Activated B cell treated with CpG ODN at 0.5 μM for 24 hours (primary cell): ENCODE measurements at regions of chr20 and their contacts with region 1.

Region 1: DNA sequence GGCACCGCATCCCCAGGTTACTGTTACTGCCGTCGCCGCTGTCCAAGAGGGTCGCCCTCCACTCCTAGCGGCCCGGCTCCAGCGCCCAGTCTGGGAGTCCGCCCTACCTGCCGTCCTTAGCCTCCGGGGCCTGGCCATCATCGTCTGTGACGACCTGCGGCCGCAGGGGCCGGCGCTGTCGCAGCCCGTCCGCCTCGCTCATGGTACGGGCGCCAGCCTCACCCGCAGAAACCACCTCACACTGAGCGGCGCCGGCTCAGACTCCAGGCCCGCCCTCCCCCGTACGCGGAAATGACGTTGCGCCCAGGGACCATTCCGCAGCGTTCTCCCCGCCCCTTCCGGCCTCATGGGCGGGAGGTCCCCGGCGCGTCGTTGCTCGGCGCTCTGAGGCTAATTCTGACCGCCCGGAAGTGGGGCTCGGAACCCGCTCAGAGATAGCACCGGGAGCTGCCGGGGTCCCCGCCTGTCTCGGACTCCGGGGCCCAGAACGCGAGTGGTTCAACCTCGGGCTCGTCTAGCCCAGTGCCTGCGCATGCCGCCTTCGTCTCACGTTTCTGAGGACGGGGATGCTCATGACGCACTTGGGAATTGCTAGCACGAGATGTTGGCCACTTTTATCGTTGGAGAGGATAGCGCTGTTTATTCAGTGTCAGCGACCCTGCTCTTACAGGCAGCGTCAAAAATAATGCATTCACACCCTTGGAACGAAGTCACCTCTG is at the start of gene APMAP:
- DNase-seq: peak; percentile 97
- ATAC-seq: peak; percentile 90
- H3K4me3 Mint-ChIP-seq: peak within 1 kb of the TSS; percentile 92
- H3K27ac Mint-ChIP-seq: peak within 1 kb of the TSS; percentile 95
- H3K4me1 Mint-ChIP-seq: peaks cover 48% of the 10 kb centered on the region
- H3K27me3 Mint-ChIP-seq: no peaks in the 10 kb centered on the region
- CTCF ChIP-seq: no peak
- total RNA-seq, gene APMAP: 22.3 and 24.9 TPM in 2 replicates

Region 2: GRCh38 chr20:23357767-23358591 is 1634.7 kb before region 1 on chr20:
- CTCF ChIA-PET with region 1: no interaction called
- POLR2A ChIA-PET with region 1: no interaction called
- intact Hi-C with region 1: loop called (anchors 1 kb)
- DNase-seq: peak; percentile 100
- ATAC-seq: peak; percentile 80
- H3K4me3 Mint-ChIP-seq: peak overlapping the region; percentile 90
- H3K27ac Mint-ChIP-seq: peak overlapping the region; percentile 94
- H3K4me1 Mint-ChIP-seq: peaks cover 30% of the 10 kb centered on the region
- H3K27me3 Mint-ChIP-seq: no peaks in the 10 kb centered on the region
- CTCF ChIP-seq: no peak

Region 3: DNA sequence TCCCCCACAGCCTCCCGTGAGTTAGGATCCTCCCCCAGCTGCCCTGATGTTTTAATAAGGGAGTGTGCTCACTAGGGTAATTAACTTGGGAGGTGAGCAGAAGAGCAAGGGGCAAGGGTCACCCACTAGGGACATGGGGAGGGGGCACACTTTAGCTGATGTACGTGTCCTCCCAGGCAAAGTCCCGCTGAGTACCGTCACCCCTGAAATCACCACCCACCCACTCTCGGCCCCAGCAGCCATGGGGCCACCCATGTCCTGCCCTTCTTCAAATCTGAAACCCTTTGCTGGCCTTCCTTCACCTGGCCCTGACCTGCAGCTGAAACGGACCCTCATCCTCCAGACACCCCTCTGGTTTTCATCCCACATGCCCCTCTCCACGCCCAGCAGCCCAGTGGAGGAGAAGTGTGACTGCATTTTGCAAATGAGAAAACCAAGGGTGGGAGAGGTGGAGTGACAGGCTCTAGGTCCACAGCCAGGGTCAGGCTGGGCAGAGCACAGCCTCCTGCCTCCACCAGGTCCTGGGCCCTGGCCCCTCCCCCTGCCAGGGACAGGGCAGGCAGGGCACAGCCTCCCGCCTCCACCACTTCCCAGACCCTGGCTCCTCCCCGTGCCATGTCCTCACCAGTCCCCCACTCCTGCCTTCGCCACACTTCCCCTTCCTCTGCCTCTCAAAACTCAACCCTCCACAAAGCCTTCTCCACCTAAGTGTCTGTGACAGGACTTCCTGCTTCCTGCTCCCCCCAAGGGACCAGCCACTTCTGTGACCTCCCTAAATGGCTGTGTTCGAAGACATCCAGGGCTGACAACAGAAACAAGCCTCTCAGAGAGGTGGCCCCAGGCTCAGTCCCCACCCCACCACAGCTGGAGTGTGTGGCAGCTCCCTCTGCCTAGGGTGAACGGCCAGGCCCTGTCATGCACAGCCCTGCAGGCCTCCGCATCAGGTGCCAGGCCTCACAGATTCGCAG is 50.2 kb after region 1 on chr20:
- CTCF ChIA-PET with region 1: interaction called, 10 read pairs
- POLR2A ChIA-PET with region 1: interaction called, 7 read pairs
- intact Hi-C with region 1: loop called (anchors 1 kb)
- DNase-seq: peak; percentile 57
- ATAC-seq: peak; percentile 92
- H3K4me3 Mint-ChIP-seq: peak overlapping the region; percentile 51
- H3K27ac Mint-ChIP-seq: peak overlapping the region; percentile 90
- H3K4me1 Mint-ChIP-seq: peaks cover 70% of the 10 kb centered on the region
- H3K27me3 Mint-ChIP-seq: no peaks in the 10 kb centered on the region
- CTCF ChIP-seq: no peak

Region 4: GRCh38 chr20:25178563-25179438 is 186.2 kb after region 1 on chr20:
- CTCF ChIA-PET with region 1: no interaction called
- POLR2A ChIA-PET with region 1: no interaction called
- intact Hi-C with region 1: loop called (anchors 1 kb)
- DNase-seq: no peak
- ATAC-seq: peak; percentile 37
- H3K4me3 Mint-ChIP-seq: no peak overlapping the region
- H3K27ac Mint-ChIP-seq: no peak overlapping the region
- H3K4me1 Mint-ChIP-seq: no peaks in the 10 kb centered on the region
- H3K27me3 Mint-ChIP-seq: peaks cover 10% of the 10 kb centered on the region
- CTCF ChIP-seq: no peak

Region 5: GRCh38 chr20:25294459-25295385 is 302.1 kb after region 1 on chr20:
- CTCF ChIA-PET with region 1: no interaction called
- POLR2A ChIA-PET with region 1: no interaction called
- intact Hi-C with region 1: loop called (anchors 1 kb)
- DNase-seq: peak; percentile 54
- ATAC-seq: peak; percentile 92
- H3K4me3 Mint-ChIP-seq: no peak overlapping the region
- H3K27ac Mint-ChIP-seq: no peak overlapping the region
- H3K4me1 Mint-ChIP-seq: peaks cover 5% of the 10 kb centered on the region
- H3K27me3 Mint-ChIP-seq: no peaks in the 10 kb centered on the region
- CTCF ChIP-seq: no peak

Region 6: DNA sequence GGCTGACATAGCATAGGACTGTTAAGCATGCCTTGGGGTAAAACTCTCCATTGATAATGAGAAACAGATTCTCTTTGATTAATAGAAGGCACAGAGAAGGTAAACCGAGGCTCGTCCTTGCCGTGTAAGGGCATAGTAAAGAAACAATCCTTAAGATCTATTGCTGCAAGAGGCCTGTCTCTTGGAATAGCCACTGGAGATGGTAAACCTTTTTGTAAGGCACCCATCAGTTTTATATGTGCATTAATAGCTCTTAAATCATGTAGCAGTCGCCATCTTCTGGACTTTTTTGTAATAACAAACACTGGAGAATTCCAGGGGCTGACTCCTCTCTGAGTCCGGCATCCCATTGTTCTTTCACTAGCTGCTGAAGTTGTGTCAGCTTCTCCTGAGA is 406.4 kb after region 1 on chr20:
- CTCF ChIA-PET with region 1: interaction called, 9 read pairs
- POLR2A ChIA-PET with region 1: no interaction called
- intact Hi-C with region 1: loop called (anchors 1 kb)
- DNase-seq: no peak
- ATAC-seq: peak; percentile 75
- H3K4me3 Mint-ChIP-seq: no peak overlapping the region
- H3K27ac Mint-ChIP-seq: no peak overlapping the region
- H3K4me1 Mint-ChIP-seq: peaks cover 5% of the 10 kb centered on the region
- H3K27me3 Mint-ChIP-seq: no peaks in the 10 kb centered on the region
- CTCF ChIP-seq: no peak